ENCODE measurements at regions of chr1 and their contacts with region 1.

Region 1: DNA sequence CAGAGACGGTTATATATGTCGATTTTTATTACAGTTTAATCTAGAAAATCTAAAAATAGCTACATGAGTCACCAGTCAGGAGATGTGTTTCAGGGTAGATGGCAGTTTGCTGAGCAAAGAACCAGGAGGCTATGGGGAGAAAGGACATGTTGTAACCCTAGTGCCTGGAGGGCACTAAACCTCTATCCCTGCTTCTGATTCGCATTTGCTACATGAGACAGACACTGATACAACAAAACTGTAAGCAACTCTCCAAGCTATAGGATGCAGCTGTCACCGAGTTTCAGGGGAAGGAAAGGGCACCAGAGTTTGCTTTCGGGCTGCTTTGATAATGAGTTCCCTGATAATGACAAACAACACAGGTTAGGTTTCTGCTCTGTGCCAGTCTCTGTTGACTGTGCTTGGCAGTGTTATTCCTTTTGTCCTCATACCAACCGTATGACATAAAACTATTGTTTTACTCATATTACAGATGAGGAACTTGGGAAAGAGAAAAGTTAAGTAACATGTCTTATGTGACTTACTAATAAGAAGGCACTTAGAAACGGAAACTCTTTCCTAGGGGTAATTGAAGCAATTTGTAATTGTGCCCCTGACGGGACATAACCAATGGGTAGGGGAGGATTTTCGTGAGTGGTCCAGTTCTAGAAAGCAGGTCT is 43.1 kb downstream of the C1orf198 start:
- DNase-seq: no peak

Region 2: GRCh38 chr1:230849451-230850224 is 24.4 kb after region 1 on chr1:
- intact Hi-C with region 1: loop called (anchors 2 kb)
- DNase-seq: peak; percentile 86

Measured in cardiac septum (tissue), 1 donor.